Tibial artery (tissue), 4 donors: ENCODE measurements at regions of chr12 and their contacts with region 1.

Region 1: DNA sequence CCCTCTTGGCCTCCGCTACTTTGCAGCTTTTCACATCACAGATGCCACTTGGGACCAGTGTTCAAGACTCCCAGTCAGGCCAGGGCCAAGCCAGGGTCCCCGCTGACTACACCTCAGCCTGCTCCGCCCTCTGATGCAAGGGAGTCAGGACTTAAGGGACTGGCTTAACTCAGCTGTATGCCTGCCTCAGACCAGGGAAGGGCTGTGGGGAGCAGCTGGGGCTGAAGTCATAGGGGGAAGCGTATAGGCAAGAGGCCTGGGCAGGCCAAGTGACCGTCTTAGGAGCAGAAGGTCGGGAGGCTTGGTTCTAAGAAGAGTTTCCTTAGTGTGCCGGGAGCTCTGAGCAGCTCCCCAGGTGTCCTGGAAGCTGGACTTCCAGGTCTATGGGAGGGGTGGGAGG is 21.9 kb downstream of the KDM2B start:
- DNase-seq: no peak
- H3K4me3 ChIP-seq: no peak overlapping the region
- H3K27ac ChIP-seq: no peak overlapping the region
- H3K4me1 ChIP-seq: peaks cover 0 to 9% (median 0%) of the 10 kb centered on the region in 4 donors
- H3K27me3 ChIP-seq: no peaks in the 10 kb centered on the region
- CTCF ChIP-seq: no peak

Region 2: DNA sequence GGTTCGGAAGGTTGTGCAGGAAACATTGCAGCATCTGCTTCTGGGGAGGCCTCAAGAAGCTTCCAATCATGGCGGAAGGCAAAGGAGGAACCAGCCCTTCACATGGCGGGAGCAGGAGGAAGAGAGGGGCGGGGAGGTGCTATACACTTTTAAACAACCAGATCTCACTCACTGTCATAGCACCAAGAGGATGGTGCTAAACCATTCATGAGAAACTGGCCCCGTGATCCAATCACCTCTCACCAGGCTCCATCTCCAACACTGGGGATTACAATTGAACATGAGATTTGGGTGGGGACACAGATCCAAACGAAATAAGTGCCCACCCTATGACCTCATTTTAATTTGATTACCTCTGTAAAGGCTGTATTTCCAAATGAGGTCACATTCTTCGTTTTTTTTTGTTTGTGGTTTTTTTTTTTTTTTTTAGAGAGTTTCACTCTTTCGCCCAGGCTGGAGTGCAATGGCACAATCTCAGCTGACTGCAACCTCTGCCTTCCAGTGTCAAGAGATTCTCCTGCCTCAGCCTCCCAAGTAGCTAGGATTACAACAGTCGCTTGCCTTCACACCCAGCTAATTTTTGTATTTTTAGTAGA is 56.0 kb after region 1 on chr12:
- intact Hi-C with region 1: loop called (anchors 5 kb)
- DNase-seq: no peak
- H3K4me3 ChIP-seq: no peak overlapping the region
- H3K27ac ChIP-seq: no peak overlapping the region
- H3K4me1 ChIP-seq: peaks cover 0 to 16% (median 6%) of the 10 kb centered on the region in 4 donors
- H3K27me3 ChIP-seq: no peaks in the 10 kb centered on the region
- CTCF ChIP-seq: no peak

Region 3: DNA sequence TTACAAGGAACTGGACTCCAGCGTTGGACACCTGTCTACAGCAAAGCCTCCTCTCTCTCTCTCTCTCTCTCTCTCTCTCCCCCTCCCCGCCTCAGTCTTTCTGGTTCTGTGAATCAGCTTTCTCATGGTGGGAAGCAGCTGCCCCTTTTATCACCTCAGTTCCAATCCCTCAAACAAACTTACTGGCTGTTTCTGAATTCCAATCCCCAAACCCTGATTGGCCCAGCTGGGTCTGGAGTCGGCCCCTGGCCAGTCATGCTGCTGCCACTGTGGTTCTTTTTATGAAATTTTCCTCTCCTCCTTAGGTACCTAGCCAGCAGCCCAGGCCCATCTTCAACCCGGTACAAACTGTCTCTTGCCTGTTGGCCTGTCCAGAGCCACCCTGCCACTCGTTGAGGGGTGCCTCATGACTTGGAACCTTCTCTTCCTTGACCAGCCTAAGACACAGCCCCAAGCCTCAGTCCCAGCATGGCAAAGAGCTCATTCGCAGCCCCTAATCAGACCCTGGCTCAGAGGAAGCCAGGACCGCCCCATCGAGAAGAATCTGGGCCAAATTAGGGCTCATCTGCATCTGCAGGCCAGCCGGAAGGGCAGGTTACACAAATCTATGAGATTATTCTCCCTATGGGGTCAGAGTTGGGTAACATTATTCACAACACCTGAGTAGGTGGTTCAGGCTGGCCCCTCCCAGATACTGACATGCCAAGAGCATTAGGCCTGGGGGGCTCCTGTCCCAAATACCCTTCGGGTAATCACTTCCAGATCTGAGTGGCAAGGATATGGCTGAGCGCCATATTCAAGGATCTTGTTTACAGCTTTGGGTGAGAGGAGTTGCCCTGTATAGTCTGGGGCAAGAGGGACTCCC is 120.0 kb after region 1 on chr12:
- intact Hi-C with region 1: loop called (anchors 5 kb)
- DNase-seq: no peak
- H3K4me3 ChIP-seq: no peak overlapping the region
- H3K27ac ChIP-seq: no peak overlapping the region
- H3K4me1 ChIP-seq: no peaks in the 10 kb centered on the region
- H3K27me3 ChIP-seq: no peaks in the 10 kb centered on the region
- CTCF ChIP-seq: no peak